ENCODE measurements at regions of chr5 and their contacts with region 1.

Region 1: DNA sequence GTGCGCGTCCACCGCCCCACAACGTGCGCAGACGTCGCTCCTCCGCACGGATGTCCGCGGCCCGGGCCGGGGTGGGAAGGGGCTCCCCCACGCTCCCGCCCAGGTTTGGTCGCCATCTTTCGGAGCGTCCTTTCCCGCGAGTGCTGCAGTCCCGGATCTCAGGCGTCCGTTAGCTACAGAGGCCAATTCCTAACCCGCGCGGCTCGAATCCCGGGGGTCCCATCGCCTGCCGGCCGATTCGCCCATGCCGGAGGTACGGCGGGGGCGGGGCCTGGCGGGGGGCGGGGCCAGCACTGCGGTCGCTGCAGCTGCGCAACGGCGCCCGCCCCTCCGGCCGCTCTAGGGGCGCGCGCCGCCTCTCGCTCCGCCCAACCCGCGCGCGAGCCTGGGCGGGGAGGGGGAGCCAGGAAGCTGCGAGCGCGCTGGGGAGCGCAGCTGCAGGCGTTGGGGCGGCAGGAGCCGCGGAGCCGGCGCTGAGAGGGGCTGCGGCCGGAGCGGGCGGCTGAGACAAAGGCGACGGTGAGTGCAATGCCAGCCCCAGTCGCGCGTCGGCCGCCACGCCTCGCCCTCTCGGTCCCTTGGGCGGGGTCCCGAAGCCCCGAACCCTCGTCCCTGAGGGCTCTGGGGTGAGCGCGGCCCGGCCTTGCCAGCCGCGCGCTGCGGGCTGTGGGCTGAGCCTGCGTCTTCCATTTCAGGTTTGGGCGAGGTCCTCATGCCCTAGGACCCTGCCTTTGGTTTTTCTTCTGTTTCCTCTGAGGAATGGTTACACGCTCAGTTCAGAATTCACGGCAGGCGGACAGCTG is at the start of gene CDC42SE2:
- DNase-seq: peak; percentile 80 to 90 (median 88)
- H3K4me3 ChIP-seq: peak within 1 kb of the TSS; percentile 89
- H3K4me3 Mint-ChIP-seq: peak within 1 kb of the TSS; percentile 87 to 99 (median 91)
- H3K27ac ChIP-seq: peak within 1 kb of the TSS; percentile 89
- H3K27ac Mint-ChIP-seq: peak within 1 kb of the TSS; percentile 92 to 99 (median 96)
- H3K4me1 ChIP-seq: peaks cover 52% of the 10 kb centered on the region
- H3K4me1 Mint-ChIP-seq: peaks cover 52 to 58% (median 58%) of the 10 kb centered on the region in 3 donors
- H3K27me3 ChIP-seq: no peaks in the 10 kb centered on the region
- H3K27me3 Mint-ChIP-seq: no peaks in the 10 kb centered on the region
- total RNA-seq, gene CDC42SE2: 125 to 131 TPM

Region 2: GRCh38 chr5:131170540-131171275 is 93.1 kb before region 1 on chr5 and contains the start of gene LYRM7:
- CTCF ChIA-PET with region 1: interaction called, 13 read pairs
- POLR2A ChIA-PET with region 1: interaction called, 13 read pairs
- DNase-seq: peak; percentile 90 to 98 (median 95)
- H3K4me3 ChIP-seq: peak within 1 kb of the TSS; percentile 79
- H3K4me3 Mint-ChIP-seq: peak within 1 kb of the TSS; percentile 94 to 100 (median 98)
- H3K27ac ChIP-seq: peak within 1 kb of the TSS; percentile 80
- H3K27ac Mint-ChIP-seq: peak within 1 kb of the TSS; percentile 88 to 99 (median 98)
- H3K4me1 ChIP-seq: peaks cover 18% of the 10 kb centered on the region
- H3K4me1 Mint-ChIP-seq: peaks cover 41 to 62% (median 53%) of the 10 kb centered on the region in 3 donors
- H3K27me3 ChIP-seq: no peaks in the 10 kb centered on the region
- H3K27me3 Mint-ChIP-seq: no peaks in the 10 kb centered on the region
- total RNA-seq, gene LYRM7: 22.7 to 24.1 TPM

Region 3: DNA sequence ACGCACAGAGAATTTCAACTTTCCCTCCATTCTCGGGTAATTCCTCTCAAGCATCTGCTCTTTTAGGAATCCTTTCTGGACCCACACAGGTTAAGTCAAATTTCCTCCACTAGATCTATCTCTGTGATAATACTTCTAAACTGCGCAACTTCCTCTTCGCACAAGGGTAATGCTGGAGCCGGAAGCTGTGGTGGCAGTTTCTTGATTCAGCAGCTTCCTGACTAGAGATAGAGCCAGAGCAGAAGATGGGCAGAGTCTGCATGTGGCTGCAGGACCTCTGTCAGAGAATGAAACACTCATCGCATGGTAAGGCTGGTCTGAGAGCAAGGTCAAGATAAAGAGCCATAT is 11.1 kb before region 1 on chr5:
- CTCF ChIA-PET with region 1: interaction called, 91 read pairs
- POLR2A ChIA-PET with region 1: interaction called, 130 read pairs
- DNase-seq: peak; percentile 70 to 89 (median 87)
- H3K4me3 ChIP-seq: peak overlapping the region; percentile 84
- H3K4me3 Mint-ChIP-seq: peak overlapping the region; percentile 92 to 99 (median 96)
- H3K27ac ChIP-seq: peak overlapping the region; percentile 82
- H3K27ac Mint-ChIP-seq: peak overlapping the region; percentile 88 to 99 (median 96)
- H3K4me1 ChIP-seq: peaks cover 49% of the 10 kb centered on the region
- H3K4me1 Mint-ChIP-seq: peaks cover 58 to 79% (median 73%) of the 10 kb centered on the region in 3 donors
- H3K27me3 ChIP-seq: no peaks in the 10 kb centered on the region
- H3K27me3 Mint-ChIP-seq: no peaks in the 10 kb centered on the region

Region 4: DNA sequence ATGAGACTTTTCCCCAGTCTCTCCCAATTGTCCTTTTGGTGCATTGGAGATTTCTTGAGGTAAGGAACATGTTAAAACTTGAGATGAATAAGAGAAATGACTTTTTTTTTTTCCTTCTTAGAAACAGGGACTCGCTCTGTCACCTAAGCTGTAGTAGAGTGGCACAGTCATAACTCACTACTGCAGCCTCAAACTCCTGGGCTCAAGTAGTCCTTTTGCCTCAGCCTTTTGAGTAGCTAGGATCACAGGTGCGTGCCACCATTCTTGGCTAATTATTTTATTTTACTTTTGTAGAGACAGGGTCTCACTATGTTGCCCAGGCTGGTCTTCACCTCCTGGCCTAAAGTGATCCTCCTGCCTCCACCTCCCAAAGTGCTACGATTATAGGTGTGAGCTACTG is 25.9 kb after region 1 on chr5:
- CTCF ChIA-PET with region 1: interaction called, 15 read pairs
- POLR2A ChIA-PET with region 1: interaction called, 12 read pairs
- DNase-seq: no peak
- H3K4me3 ChIP-seq: peak overlapping the region; percentile 26
- H3K4me3 Mint-ChIP-seq: peak overlapping the region; percentile 60 to 89 (median 86)
- H3K27ac ChIP-seq: no peak overlapping the region
- H3K27ac Mint-ChIP-seq: peak overlapping the region; percentile 82 to 99 (median 92)
- H3K4me1 ChIP-seq: peaks cover 86% of the 10 kb centered on the region
- H3K4me1 Mint-ChIP-seq: peaks cover 71 to 93% (median 90%) of the 10 kb centered on the region in 3 donors
- H3K27me3 ChIP-seq: no peaks in the 10 kb centered on the region
- H3K27me3 Mint-ChIP-seq: no peaks in the 10 kb centered on the region

Region 5: GRCh38 chr5:131382407-131383395 is 118.9 kb after region 1 on chr5:
- CTCF ChIA-PET with region 1: interaction called, 59 read pairs
- POLR2A ChIA-PET with region 1: interaction called, 32 read pairs
- DNase-seq: peak; percentile 24 to 79 (median 72)
- H3K4me3 ChIP-seq: no peak overlapping the region
- H3K4me3 Mint-ChIP-seq: peak overlapping the region; percentile 51 to 82 (median 69)
- H3K27ac ChIP-seq: peak overlapping the region; percentile 29
- H3K27ac Mint-ChIP-seq: peak overlapping the region; percentile 94 to 99 (median 97)
- H3K4me1 ChIP-seq: peaks cover 77% of the 10 kb centered on the region
- H3K4me1 Mint-ChIP-seq: peaks cover 83 to 100% (median 93%) of the 10 kb centered on the region in 3 donors
- H3K27me3 ChIP-seq: no peaks in the 10 kb centered on the region
- H3K27me3 Mint-ChIP-seq: peaks cover 0 to 1% of the 10 kb centered on the region in 2 donors

Region 6: GRCh38 chr5:131466171-131466766 is 202.4 kb after region 1 on chr5:
- CTCF ChIA-PET with region 1: no interaction called
- POLR2A ChIA-PET with region 1: no interaction called
- DNase-seq: no peak
- H3K4me3 ChIP-seq: no peak overlapping the region
- H3K4me3 Mint-ChIP-seq: no peak overlapping the region
- H3K27ac ChIP-seq: no peak overlapping the region
- H3K27ac Mint-ChIP-seq: peak overlapping the region in 4 of 8 donors; percentile 12 to 84 (median 45)
- H3K4me1 ChIP-seq: peaks cover 5% of the 10 kb centered on the region
- H3K4me1 Mint-ChIP-seq: peaks cover 18 to 54% (median 42%) of the 10 kb centered on the region in 3 donors
- H3K27me3 ChIP-seq: no peaks in the 10 kb centered on the region
- H3K27me3 Mint-ChIP-seq: no peaks in the 10 kb centered on the region